ENCODE measurements at regions of chr2 and their contacts with region 1.

Region 1: GRCh38 chr2:187710791-187711521 is 156.7 kb upstream of the TFPI start:
- DNase-seq: peak; percentile 22
- ATAC-seq: no peak
- H3K4me3 ChIP-seq: no peak overlapping the region
- H3K27ac ChIP-seq: no peak overlapping the region
- H3K4me1 ChIP-seq: no peaks in the 10 kb centered on the region
- H3K27me3 ChIP-seq: no peaks in the 10 kb centered on the region
- CTCF ChIP-seq: no peak

Region 2: GRCh38 chr2:186827411-186827810 is 883.5 kb before region 1 on chr2:
- CTCF ChIA-PET with region 1: no interaction called
- POLR2A ChIA-PET with region 1: no interaction called
- intact Hi-C with region 1: loop called (anchors 10 kb)
- DNase-seq: no peak
- ATAC-seq: peak; percentile 43
- H3K4me3 ChIP-seq: no peak overlapping the region
- H3K27ac ChIP-seq: no peak overlapping the region
- H3K4me1 ChIP-seq: no peaks in the 10 kb centered on the region
- H3K27me3 ChIP-seq: no peaks in the 10 kb centered on the region
- CTCF ChIP-seq: no peak

Region 3: GRCh38 chr2:187618813-187619212 is 92.1 kb before region 1 on chr2:
- CTCF ChIA-PET with region 1: no interaction called
- POLR2A ChIA-PET with region 1: no interaction called
- intact Hi-C with region 1: no loop called
- DNase-seq: no peak
- ATAC-seq: no peak
- H3K4me3 ChIP-seq: no peak overlapping the region
- H3K27ac ChIP-seq: no peak overlapping the region
- H3K4me1 ChIP-seq: no peaks in the 10 kb centered on the region
- H3K27me3 ChIP-seq: no peaks in the 10 kb centered on the region
- CTCF ChIP-seq: no peak